ENCODE measurements at regions of chr1 and their contacts with region 1.

Region 1: DNA sequence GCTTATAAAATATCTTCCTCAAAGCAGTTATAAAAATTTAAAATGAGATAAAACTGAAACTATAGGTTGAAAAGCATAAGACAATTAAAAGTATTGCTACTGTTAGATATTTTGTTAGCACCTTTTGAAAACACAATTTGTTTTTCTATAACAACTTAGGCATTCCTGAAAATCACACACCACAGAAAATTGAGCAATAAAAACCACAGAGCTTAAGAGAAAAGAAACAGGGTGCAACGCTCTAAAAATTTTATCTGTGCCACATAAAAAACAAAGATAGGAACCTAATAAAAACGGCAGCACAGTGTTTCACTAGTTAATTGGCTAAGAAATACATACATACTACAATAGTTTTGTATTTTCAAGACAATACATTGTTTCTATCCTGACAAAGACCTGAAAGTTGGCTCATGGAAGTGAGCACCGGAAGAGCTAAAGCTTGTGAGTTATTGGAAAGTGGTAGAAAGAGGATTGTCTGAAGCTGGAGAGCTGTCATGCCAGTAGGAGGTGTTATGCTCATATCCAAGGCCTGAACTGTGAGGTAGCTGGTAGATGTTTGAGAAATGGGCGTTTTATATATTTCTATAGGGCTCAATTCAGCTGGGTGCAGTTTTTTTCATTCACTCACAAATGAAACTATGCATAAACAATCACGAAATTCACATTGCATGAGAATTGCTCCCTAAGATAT is 45.8 kb downstream of the RGS7 start:
- DNase-seq: no peak
- H3K4me3 ChIP-seq: no peak overlapping the region
- H3K4me3 Mint-ChIP-seq: no peak overlapping the region
- H3K27ac Mint-ChIP-seq: no peak overlapping the region
- H3K4me1 ChIP-seq: no peaks in the 10 kb centered on the region
- H3K4me1 Mint-ChIP-seq: no peaks in the 10 kb centered on the region
- H3K27me3 ChIP-seq: no peaks in the 10 kb centered on the region
- H3K27me3 Mint-ChIP-seq: peaks cover 8% of the 10 kb centered on the region
- CTCF ChIP-seq: no peak

Region 2: GRCh38 chr1:241181471-241181870 is 129.7 kb before region 1 on chr1:
- CTCF ChIA-PET with region 1: no interaction called
- POLR2A ChIA-PET with region 1: no interaction called
- intact Hi-C with region 1: no loop called
- DNase-seq: no peak
- H3K4me3 ChIP-seq: no peak overlapping the region
- H3K4me3 Mint-ChIP-seq: no peak overlapping the region
- H3K27ac Mint-ChIP-seq: no peak overlapping the region
- H3K4me1 ChIP-seq: no peaks in the 10 kb centered on the region
- H3K4me1 Mint-ChIP-seq: no peaks in the 10 kb centered on the region
- H3K27me3 ChIP-seq: no peaks in the 10 kb centered on the region
- H3K27me3 Mint-ChIP-seq: no peaks in the 10 kb centered on the region
- CTCF ChIP-seq: no peak

Region 3: DNA sequence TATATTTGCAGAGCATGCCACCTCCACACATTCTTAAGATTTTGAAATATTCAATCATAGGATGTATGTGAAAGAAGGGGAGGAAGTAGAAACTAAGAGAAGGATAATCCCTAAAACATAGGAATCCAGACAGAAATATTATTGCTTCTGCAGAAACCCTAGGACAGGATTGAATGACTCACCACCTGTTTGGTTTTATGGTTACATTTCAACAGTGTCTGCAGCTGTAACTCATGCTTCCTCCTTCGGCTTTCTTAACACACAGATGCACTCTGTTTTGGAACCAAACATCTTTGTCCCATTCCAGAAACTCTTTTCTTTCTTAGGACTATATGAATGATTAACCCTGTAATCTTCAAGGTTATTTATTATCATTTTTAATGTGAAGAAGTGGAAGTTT is 25.1 kb after region 1 on chr1:
- CTCF ChIA-PET with region 1: no interaction called
- POLR2A ChIA-PET with region 1: no interaction called
- intact Hi-C with region 1: no loop called
- DNase-seq: no peak
- H3K4me3 ChIP-seq: no peak overlapping the region
- H3K4me3 Mint-ChIP-seq: no peak overlapping the region
- H3K27ac Mint-ChIP-seq: no peak overlapping the region
- H3K4me1 ChIP-seq: no peaks in the 10 kb centered on the region
- H3K4me1 Mint-ChIP-seq: no peaks in the 10 kb centered on the region
- H3K27me3 ChIP-seq: no peaks in the 10 kb centered on the region
- H3K27me3 Mint-ChIP-seq: peaks cover 17% of the 10 kb centered on the region
- CTCF ChIP-seq: no peak

Region 4: DNA sequence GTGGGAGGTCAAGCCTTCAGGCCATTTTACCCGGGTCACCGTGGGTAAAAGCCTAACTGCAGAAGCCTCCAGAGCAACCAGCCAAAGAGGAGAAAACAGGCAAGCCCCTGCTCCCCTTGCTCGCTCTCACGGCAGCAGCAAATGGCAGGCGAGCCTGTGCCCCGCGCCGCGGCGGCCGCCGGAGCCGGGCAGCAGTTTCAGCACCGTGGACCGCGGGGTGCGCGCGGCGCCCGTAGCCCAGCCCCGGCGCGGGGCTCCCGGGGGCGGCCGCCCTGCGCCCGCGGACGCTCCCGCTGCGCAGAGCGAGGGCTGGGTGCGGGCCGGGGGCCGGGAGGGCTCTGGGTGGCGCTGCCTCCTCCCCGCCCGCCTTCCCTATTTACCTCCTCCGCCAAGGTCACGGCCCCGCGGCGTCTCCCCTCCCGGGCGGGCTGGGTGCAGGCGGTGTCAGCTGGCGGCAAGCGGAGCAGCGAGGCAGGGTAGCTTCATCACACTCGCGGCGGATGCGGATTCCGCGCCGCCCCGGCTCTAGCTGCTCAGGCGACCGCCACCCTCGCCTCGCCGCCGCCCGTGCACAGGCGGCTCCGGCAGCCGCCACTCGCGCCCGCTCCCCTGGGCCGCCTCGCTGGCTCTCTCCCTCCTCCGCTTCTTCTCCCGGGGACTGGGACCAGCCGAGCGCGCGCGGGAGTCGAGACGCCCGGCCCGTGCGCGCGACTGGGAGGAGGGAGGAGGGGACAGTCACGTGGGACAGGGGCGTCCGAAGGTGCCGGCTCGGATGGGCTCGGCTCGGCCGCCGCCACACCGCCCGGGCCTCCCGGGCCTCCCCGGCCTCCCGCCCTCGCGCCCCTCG is 45.5 kb after region 1 on chr1 and contains the start of gene RGS7:
- CTCF ChIA-PET with region 1: no interaction called
- POLR2A ChIA-PET with region 1: no interaction called
- intact Hi-C with region 1: no loop called
- DNase-seq: peak; percentile 52 to 60
- H3K4me3 ChIP-seq: peak within 1 kb of the TSS; percentile 50
- H3K4me3 Mint-ChIP-seq: peak within 1 kb of the TSS; percentile 53
- H3K27ac Mint-ChIP-seq: no peak within 1 kb of the TSS
- H3K4me1 ChIP-seq: no peaks in the 10 kb centered on the region
- H3K4me1 Mint-ChIP-seq: no peaks in the 10 kb centered on the region
- H3K27me3 ChIP-seq: peaks cover 2% of the 10 kb centered on the region
- H3K27me3 Mint-ChIP-seq: peaks cover 19% of the 10 kb centered on the region
- CTCF ChIP-seq: no peak
- total RNA-seq, gene RGS7: not detected in 2 replicates

Region 5: GRCh38 chr1:241423541-241424479 is 112.6 kb after region 1 on chr1:
- CTCF ChIA-PET with region 1: no interaction called
- POLR2A ChIA-PET with region 1: no interaction called
- intact Hi-C with region 1: no loop called
- DNase-seq: peak; percentile 40 to 49
- H3K4me3 ChIP-seq: peak overlapping the region; percentile 50
- H3K4me3 Mint-ChIP-seq: peak overlapping the region; percentile 57
- H3K27ac Mint-ChIP-seq: no peak overlapping the region
- H3K4me1 ChIP-seq: peaks cover 6% of the 10 kb centered on the region; the same call in 1 of the 2 replicates
- H3K4me1 Mint-ChIP-seq: peaks cover 12% of the 10 kb centered on the region
- H3K27me3 ChIP-seq: no peaks in the 10 kb centered on the region; the same call in 1 of the 2 replicates
- H3K27me3 Mint-ChIP-seq: peaks cover 21% of the 10 kb centered on the region
- CTCF ChIP-seq: peak in 1 of 2 experiments; percentile 17

Region 6: DNA sequence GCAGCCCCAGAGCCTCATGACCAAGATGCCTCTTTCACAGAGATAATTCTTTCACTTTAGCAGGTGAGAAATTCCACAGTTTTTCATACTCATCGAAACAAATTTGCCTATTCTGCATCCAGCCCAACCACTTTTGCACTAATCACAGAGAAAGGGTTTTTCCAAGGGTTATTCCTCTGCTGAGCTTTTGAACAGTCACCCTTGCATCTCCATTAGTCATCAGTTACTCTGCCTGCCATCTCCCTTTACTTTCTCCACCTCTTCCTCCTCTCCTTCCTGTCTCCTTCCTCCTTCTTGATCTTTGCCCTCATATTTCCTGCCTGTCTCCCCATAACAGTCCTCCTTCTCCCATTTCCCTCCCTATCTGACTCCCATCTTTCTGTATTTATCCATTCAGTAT is 164.5 kb after region 1 on chr1:
- CTCF ChIA-PET with region 1: no interaction called
- POLR2A ChIA-PET with region 1: interaction called, 17 read pairs
- intact Hi-C with region 1: no loop called
- DNase-seq: no peak
- H3K4me3 ChIP-seq: no peak overlapping the region
- H3K4me3 Mint-ChIP-seq: no peak overlapping the region
- H3K27ac Mint-ChIP-seq: no peak overlapping the region
- H3K4me1 ChIP-seq: no peaks in the 10 kb centered on the region
- H3K4me1 Mint-ChIP-seq: no peaks in the 10 kb centered on the region
- H3K27me3 ChIP-seq: no peaks in the 10 kb centered on the region
- H3K27me3 Mint-ChIP-seq: no peaks in the 10 kb centered on the region
- CTCF ChIP-seq: no peak

Region 7: GRCh38 chr1:241596633-241597032 is 285.4 kb after region 1 on chr1:
- CTCF ChIA-PET with region 1: no interaction called
- POLR2A ChIA-PET with region 1: interaction called, 15 read pairs
- intact Hi-C with region 1: no loop called
- DNase-seq: no peak
- H3K4me3 ChIP-seq: no peak overlapping the region
- H3K4me3 Mint-ChIP-seq: no peak overlapping the region
- H3K27ac Mint-ChIP-seq: no peak overlapping the region
- H3K4me1 ChIP-seq: peaks cover 18% of the 10 kb centered on the region
- H3K4me1 Mint-ChIP-seq: peaks cover 11% of the 10 kb centered on the region
- H3K27me3 ChIP-seq: no peaks in the 10 kb centered on the region
- H3K27me3 Mint-ChIP-seq: no peaks in the 10 kb centered on the region
- CTCF ChIP-seq: no peak